Heart left ventricle (tissue), 16 donors: ENCODE measurements at regions of chr5 and their contacts with region 1.

Region 1: GRCh38 chr5:160260881-160261815 is 31.8 kb downstream of the FABP6 start:
- DNase-seq: peak in 3 of 5 donors; percentile 22 to 82 (median 36)
- ATAC-seq: peak; percentile 41 to 96 (median 84)
- H3K4me3 ChIP-seq: no peak overlapping the region
- H3K27ac ChIP-seq: peak overlapping the region in 2 of 12 donors; percentile 0 to 76
- H3K4me1 ChIP-seq: peaks cover 0 to 32% (median 23%) of the 10 kb centered on the region in 12 donors
- H3K27me3 ChIP-seq: no peaks in the 10 kb centered on the region
- CTCF ChIP-seq: no peak
- POLR2A ChIP-seq: no peak

Region 2: GRCh38 chr5:160312134-160312959 is 51.2 kb after region 1 on chr5 and contains the start of gene CCNJL:
- intact Hi-C with region 1: loop called in 5 of 10 experiments (anchors 1 to 5 kb)
- DNase-seq: peak; percentile 66 to 82 (median 70)
- ATAC-seq: peak; percentile 28 to 83 (median 78)
- H3K4me3 ChIP-seq: peak within 1 kb of the TSS; percentile 59 to 97 (median 74)
- H3K27ac ChIP-seq: peak within 1 kb of the TSS in 11 of 12 donors; percentile 35 to 85 (median 80)
- H3K4me1 ChIP-seq: peaks cover 0 to 38% (median 9%) of the 10 kb centered on the region in 12 donors
- H3K27me3 ChIP-seq: peaks cover 0 to 49% (median 0%) of the 10 kb centered on the region in 9 donors
- CTCF ChIP-seq: no peak
- POLR2A ChIP-seq: peak in 1 of 2 donors; percentile 46
- total RNA-seq, gene CCNJL: 4.1 to 12.4 (median 7.6) TPM